Activated CD4-positive, alpha-beta T cell treated with anti-CD3 and anti-CD28 coated beads for 36 hours (primary cell): ENCODE measurements at regions of chr19 and their contacts with region 1.

Region 1: DNA sequence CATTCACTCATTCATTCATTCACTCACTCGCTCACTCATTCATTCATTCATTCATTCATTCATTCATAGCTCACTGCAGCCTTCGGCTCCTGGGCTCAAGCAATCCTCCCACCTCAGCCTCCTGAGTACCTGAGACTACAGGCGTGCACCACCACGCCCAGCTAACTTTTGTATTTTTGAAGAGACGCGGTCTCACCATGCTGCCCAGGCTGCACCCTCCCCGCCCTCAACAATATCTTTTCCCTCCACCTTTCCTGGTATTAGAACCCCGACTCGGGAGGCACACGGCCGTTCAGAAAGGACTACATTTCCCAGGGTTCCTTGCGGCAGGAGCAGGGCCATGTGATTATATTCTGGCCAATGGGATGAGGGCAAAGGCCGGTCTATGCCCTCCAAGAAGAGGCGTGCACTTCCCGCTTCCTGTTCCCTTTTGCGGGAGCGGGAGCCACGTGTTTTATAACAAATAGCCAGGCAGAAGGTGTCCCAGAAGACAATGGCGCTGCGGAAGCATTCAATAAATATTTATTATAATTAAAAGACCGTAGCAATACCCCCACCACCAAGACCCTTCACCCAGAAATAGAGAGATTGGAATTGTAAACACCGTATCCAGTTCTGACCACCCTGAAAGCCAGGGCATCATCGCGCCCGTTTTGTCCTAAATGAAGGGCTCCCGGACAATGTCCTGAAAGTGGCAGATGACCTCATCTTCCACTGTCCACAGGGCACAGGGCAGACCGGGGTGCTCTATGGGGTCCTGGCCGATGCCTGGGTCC is 15.9 kb downstream of the TICAM1 start:
- DNase-seq: peak; percentile 84
- ATAC-seq: peak; percentile 87
- H3K4me3 Mint-ChIP-seq: peak overlapping the region; percentile 55
- H3K27ac Mint-ChIP-seq: peak overlapping the region; percentile 77
- H3K4me1 Mint-ChIP-seq: peaks cover 26% of the 10 kb centered on the region
- H3K27me3 Mint-ChIP-seq: no peaks in the 10 kb centered on the region

Region 2: DNA sequence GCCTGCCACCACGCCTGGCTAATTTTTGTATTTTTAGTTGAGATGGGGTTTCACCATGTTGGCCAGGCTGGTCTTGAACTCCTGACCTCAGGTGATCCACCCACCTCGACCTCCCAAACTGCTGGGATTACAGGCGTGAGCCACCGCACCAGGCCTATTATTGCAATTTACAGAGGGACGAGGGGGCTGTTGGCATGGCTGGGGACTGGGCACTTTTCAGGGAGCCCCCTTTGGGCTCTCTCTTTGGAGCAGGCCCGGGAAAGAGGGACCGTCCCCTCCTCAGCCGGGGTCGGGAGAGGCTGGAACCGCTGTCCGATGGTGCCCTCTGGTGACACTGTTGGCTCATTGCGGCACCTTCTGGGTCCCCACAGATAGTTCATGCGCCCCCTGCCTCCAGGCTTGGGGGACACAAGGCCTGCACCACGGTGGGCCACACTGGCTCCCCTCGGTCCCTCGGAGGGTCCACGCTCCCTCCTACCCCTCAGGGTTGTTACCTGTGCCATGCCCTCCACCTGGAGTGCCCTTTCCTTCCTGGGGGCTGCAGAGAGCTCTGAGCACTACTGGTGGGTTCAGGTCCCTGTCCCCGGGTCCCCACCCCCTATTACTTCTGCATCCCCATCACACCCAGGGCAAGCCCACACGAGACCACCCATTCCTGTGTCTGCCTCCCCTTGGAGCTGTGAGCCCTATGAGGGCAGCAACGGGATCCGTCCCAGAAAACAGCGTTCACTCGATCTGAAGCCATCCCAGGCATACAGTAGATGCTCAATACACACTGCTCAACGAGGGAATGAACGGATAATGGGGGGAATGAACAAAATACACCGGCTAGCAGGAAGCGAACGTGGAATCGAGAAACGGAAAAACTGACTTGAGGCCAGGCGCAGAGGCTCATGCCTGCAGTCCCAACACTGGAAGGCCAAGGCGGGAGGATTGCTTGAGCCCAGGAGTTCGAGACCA is 11.6 kb before region 1 on chr19:
- CTCF ChIA-PET with region 1: interaction called, 24 read pairs
- POLR2A ChIA-PET with region 1: no interaction called
- intact Hi-C with region 1: no loop called
- DNase-seq: peak; percentile 85
- ATAC-seq: peak; percentile 95
- H3K4me3 Mint-ChIP-seq: no peak overlapping the region
- H3K27ac Mint-ChIP-seq: no peak overlapping the region
- H3K4me1 Mint-ChIP-seq: no peaks in the 10 kb centered on the region
- H3K27me3 Mint-ChIP-seq: no peaks in the 10 kb centered on the region

Region 3: GRCh38 chr19:4831304-4831978 is 15.8 kb after region 1 on chr19 and contains the start of gene TICAM1:
- CTCF ChIA-PET with region 1: interaction called, 24 read pairs
- POLR2A ChIA-PET with region 1: no interaction called
- intact Hi-C with region 1: loop called (anchors 1 to 2 kb)
- DNase-seq: peak; percentile 87
- ATAC-seq: peak; percentile 91
- H3K4me3 Mint-ChIP-seq: peak within 1 kb of the TSS; percentile 85
- H3K27ac Mint-ChIP-seq: peak within 1 kb of the TSS; percentile 87
- H3K4me1 Mint-ChIP-seq: peaks cover 22% of the 10 kb centered on the region
- H3K27me3 Mint-ChIP-seq: no peaks in the 10 kb centered on the region
- total RNA-seq, gene TICAM1: 23.4 to 24.1 TPM

Region 4: DNA sequence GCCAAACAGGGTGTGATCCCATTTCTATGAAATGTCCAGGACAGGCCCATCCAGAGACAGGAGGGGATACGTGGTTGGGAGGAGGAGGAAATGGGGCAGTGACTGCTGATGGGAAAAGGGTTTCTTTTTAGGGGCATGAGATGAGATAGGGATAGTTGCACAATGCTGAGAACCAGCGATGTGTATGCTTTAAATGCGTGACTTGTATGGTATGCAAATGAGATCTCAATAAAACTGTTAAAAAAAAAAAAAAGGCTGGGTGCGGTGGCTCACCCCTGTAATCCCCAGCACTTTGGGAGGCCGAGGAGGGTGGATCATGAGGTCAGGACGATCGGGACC is 25.7 kb after region 1 on chr19:
- CTCF ChIA-PET with region 1: interaction called, 210 read pairs
- POLR2A ChIA-PET with region 1: no interaction called
- intact Hi-C with region 1: loop called in 1 of 2 experiments (anchors 1 kb)
- DNase-seq: no peak
- ATAC-seq: peak; percentile 10
- H3K4me3 Mint-ChIP-seq: peak overlapping the region; percentile 43
- H3K27ac Mint-ChIP-seq: peak overlapping the region; percentile 87
- H3K4me1 Mint-ChIP-seq: peaks cover 12% of the 10 kb centered on the region
- H3K27me3 Mint-ChIP-seq: no peaks in the 10 kb centered on the region

Region 5: DNA sequence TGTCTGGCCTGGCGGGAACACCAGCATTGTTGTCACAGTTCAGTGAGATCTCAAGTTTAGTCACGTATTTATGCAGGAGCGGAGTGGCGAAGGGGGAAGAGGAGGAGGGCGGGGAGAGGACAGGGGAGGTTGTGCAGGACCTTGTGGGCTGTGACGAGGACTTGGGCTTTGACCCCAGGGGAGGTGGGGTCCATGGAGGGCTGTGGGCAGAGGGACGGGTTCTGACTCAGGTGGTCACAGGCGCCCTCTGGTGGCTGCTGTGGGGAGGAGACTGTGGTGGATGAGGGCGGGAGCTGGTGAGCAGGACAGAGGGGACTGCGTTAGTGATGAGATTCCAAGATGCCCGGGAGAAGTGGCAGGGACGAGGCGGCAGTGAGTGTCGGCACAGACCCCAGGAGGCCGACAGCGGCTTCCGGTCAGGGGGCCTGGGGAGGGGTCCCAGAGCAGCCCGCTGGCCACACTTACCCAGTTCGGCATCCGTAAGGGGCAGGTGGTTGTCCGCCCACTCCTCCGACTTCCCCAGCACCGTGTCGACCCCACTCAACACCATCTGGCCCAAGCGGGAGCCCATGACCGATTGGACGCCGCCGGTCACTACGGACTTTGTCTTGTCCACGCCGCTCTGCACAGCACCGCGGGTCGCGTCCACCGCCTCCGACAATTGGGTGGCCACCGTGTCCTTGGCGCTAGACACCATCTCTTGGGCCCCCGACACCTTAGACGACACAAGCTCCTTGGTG is 36.1 kb after region 1 on chr19:
- CTCF ChIA-PET with region 1: interaction called, 210 read pairs
- POLR2A ChIA-PET with region 1: interaction called, 6 read pairs
- intact Hi-C with region 1: no loop called
- DNase-seq: peak; percentile 86
- ATAC-seq: peak; percentile 89
- H3K4me3 Mint-ChIP-seq: no peak overlapping the region
- H3K27ac Mint-ChIP-seq: no peak overlapping the region
- H3K4me1 Mint-ChIP-seq: peaks cover 2% of the 10 kb centered on the region
- H3K27me3 Mint-ChIP-seq: no peaks in the 10 kb centered on the region

Region 6: DNA sequence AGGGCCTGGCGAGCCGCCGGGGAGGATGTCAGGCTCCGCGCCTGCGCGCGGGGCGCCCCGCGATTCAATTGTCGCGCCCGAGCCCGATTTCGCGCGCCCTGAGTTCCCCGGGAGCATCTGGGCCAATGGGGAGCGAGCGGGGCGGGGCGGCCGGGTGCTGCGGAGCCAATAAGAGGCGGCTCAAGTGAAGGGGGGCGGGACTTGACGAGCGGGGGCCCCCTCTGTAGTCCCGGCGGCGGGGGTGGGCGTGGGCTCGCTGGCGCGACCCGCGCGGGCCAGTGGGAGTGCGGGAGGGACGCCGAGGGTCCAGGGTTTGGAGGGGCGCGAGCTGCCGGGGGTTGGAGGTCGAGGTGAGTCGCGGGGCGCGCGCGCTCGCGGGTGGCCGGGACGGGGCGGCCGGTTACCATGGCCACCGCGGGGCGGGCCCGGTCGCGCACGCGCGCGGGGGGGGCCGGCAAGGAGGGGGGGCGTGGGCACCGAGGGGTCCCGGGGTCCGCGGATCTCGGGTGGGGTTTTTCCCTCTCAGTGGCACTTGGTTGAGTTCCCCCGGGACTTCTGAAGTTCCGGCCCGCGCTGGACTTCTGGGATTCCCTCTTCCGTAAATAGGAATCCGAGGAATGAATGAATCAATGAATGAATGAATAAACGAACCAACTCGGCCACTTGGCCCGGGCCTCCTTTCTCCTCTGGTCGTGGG is 94.4 kb after region 1 on chr19:
- CTCF ChIA-PET with region 1: interaction called, 44 read pairs
- POLR2A ChIA-PET with region 1: interaction called, 3 read pairs
- intact Hi-C with region 1: loop called (anchors 1 to 2 kb)
- DNase-seq: peak; percentile 98
- ATAC-seq: peak; percentile 78
- H3K4me3 Mint-ChIP-seq: peak overlapping the region; percentile 83
- H3K27ac Mint-ChIP-seq: peak overlapping the region; percentile 90
- H3K4me1 Mint-ChIP-seq: peaks cover 42% of the 10 kb centered on the region
- H3K27me3 Mint-ChIP-seq: no peaks in the 10 kb centered on the region

Region 7: DNA sequence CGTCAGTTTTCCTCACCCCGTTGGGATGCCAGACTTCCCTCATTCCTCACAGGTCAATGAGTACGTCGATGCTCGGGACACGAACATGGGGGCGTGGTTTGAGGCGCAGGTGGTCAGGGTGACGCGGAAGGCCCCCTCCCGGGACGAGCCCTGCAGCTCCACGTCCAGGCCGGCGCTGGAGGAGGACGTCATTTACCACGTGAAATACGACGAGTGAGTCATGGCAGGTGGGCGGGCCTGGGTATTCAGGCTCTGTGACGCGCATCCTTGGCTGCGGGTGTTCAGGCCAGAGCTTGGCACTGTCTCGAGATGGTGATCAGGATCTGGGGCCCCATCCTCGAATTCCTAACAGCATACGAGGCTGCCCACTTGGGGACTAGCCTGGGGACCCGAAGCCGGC is 115.0 kb after region 1 on chr19:
- CTCF ChIA-PET with region 1: no interaction called
- POLR2A ChIA-PET with region 1: no interaction called
- intact Hi-C with region 1: no loop called
- DNase-seq: peak; percentile 29
- ATAC-seq: no peak
- H3K4me3 Mint-ChIP-seq: no peak overlapping the region
- H3K27ac Mint-ChIP-seq: no peak overlapping the region
- H3K4me1 Mint-ChIP-seq: no peaks in the 10 kb centered on the region
- H3K27me3 Mint-ChIP-seq: no peaks in the 10 kb centered on the region

Region 8: DNA sequence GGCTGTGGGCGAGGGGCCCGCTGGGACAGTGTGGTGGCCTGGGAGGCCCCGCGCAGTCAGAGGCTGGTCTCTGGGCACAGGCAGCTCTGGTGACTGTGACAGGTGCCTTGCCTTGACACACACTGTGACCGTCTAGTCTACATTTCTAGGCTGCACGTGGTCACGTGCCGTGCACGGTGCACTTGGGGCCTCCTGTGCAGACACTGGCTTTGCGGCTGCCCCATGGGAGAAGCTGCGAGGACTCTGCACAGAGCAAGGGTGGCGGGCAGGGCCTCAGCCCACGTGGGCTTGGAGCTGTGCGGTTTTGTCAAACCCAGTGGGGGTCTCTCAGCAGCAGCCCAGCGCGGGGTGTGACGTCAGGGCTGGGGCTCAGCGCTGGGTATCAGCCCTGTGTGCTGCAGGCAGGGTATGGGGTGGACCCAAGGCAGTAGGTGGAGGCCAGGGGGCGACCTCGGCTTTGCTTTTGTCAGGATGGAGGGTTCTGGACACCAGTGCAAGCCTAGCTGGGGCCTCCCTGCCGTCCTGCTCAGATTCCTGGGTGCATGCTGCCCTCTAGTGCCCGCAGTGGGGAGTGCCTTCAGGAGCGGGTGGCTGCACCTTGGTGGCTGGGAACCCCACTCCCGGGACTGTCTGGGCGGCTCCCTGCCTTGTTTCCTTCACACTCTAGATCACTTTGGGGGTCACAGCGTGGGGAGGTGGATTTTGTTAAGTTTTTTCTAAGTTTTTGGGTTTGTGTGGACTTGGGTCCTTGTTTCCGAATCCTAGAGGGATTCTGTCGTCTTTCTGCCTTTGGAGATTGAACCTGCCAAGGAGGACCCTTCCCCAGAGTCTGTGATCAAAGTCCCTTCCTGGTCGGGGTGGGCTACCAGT is 215.9 kb after region 1 on chr19:
- CTCF ChIA-PET with region 1: interaction called, 22 read pairs
- POLR2A ChIA-PET with region 1: no interaction called
- intact Hi-C with region 1: no loop called
- DNase-seq: peak; percentile 89
- ATAC-seq: peak; percentile 94
- H3K4me3 Mint-ChIP-seq: no peak overlapping the region
- H3K27ac Mint-ChIP-seq: no peak overlapping the region
- H3K4me1 Mint-ChIP-seq: peaks cover 8% of the 10 kb centered on the region
- H3K27me3 Mint-ChIP-seq: no peaks in the 10 kb centered on the region